ENCODE measurements at regions of chr1 and their contacts with region 1.

Region 1: GRCh38 chr1:151787689-151788088 is 2.6 kb downstream of the TDRKH start:
- DNase-seq: no peak
- ATAC-seq: no peak
- H3K4me3 ChIP-seq: no peak overlapping the region
- H3K27ac ChIP-seq: no peak overlapping the region
- H3K4me1 ChIP-seq: 0 out of 3 replicates have a peak, but pooled peaks cover 4% of the 10 kb centered on the region
- CTCF ChIP-seq: no peak
- EP300 ChIP-seq: no peak
- POLR2A ChIP-seq: no peak
- RAD21 ChIP-seq: no peak

Region 2: DNA sequence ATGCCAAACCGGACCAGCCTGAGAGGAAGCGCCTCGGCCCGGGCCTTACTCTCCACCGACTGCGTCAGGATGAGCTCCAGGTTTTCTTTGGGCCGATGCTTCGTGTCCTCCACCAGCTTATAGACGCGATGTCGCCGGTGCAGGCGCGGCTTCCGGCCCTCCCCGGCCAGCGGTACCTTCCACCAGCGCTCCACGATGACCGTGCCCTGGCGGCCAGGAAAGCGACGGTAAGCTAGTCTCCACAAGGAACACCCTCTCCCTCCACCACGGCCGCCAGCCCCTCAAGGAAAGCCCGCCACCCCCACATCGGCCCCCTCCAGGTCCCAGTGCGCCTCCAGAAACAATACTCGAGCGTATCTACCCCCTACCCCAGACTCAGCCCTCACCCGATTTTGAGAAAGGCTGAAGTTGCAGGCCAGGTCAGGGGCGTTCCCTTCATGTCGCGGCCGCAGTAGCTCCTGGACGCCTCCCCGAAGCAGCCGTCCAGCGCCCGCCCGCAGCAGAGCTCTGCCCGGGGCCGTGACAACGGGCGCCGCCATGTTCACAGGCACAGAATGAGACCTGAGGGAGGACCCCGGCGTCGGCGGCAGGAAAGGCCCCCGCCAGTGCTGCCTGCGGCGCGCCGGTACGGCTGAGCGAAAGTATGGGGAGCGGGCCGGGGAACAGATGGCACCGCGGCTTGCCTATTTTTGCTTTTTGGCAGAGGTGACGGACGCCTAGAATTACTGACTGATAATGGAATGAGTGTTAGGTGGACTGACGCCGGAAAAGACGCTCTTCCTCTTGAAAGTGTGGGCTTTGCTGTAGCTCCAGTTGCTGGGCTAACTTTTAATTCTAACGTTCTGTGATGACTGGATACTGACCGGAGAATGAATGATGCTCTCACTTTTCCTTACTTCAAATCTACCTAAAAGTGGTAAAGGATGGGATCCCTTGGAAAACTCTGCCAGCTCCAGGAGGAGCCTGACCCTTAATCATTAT is 24.5 kb before region 1 on chr1 and contains the start of gene MRPL9:
- CTCF ChIA-PET with region 1: interaction called, 6 read pairs
- POLR2A ChIA-PET with region 1: interaction called, 12 read pairs
- DNase-seq: peak; percentile 79 to 92
- ATAC-seq: peak; percentile 98 to 100
- H3K4me3 ChIP-seq: peak within 1 kb of the TSS; percentile 81
- H3K27ac ChIP-seq: peak within 1 kb of the TSS; percentile 93 to 95
- H3K4me1 ChIP-seq: peaks cover 12% of the 10 kb centered on the region
- CTCF ChIP-seq: no peak
- EP300 ChIP-seq: no peak
- POLR2A ChIP-seq: peak; percentile 65
- RAD21 ChIP-seq: peak in 1 of 2 experiments; percentile 23; a peak in 1 of 5 replicates
- polyA plus RNA-seq, gene MRPL9: 120 and 146 TPM in 2 replicates

Region 3: DNA sequence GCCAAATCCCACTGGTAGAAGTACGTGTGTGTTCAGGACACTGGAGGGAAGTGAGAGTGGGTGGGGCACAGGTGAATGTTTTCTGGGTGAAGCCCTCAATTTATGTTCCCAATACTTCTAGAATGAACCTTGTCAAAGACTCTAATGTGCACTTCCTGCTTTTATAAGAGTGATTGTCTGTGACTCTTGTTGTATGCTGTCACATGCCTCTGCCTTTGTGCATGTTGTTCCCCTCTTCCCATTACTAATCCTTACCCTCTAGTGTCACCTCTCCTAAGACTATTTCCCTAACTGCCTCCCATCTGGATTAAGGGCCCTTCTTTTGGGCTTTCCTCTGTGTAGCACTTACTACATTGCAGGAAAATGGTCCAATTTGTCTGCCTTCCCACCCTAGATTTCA is 20.1 kb after region 1 on chr1:
- CTCF ChIA-PET with region 1: no interaction called
- POLR2A ChIA-PET with region 1: no interaction called
- DNase-seq: no peak
- ATAC-seq: no peak
- H3K4me3 ChIP-seq: no peak overlapping the region
- H3K27ac ChIP-seq: no peak overlapping the region
- H3K4me1 ChIP-seq: no peaks in the 10 kb centered on the region
- CTCF ChIP-seq: no peak
- EP300 ChIP-seq: no peak
- POLR2A ChIP-seq: no peak
- RAD21 ChIP-seq: no peak

Measured in A549 (cell line).